ENCODE measurements at regions of chr10 and their contacts with region 1.

Region 1: GRCh38 chr10:103983367-103983911 is 16.5 kb downstream of the SLK start:
- DNase-seq: no peak
- H3K4me3 ChIP-seq: no peak overlapping the region
- H3K27ac ChIP-seq: no peak overlapping the region
- H3K4me1 ChIP-seq: peaks cover 23 to 62% (median 54%) of the 10 kb centered on the region in 4 donors
- H3K27me3 ChIP-seq: no peaks in the 10 kb centered on the region
- CTCF ChIP-seq: no peak
- EP300 ChIP-seq: no peak
- POLR2A ChIP-seq: no peak

Region 2: GRCh38 chr10:103812432-103812831 is 171.0 kb before region 1 on chr10:
- intact Hi-C with region 1: no loop called
- DNase-seq: no peak
- H3K4me3 ChIP-seq: no peak overlapping the region
- H3K27ac ChIP-seq: no peak overlapping the region
- H3K4me1 ChIP-seq: peaks cover 19 to 27% (median 23%) of the 10 kb centered on the region in 4 donors
- H3K27me3 ChIP-seq: no peaks in the 10 kb centered on the region
- CTCF ChIP-seq: no peak
- EP300 ChIP-seq: no peak
- POLR2A ChIP-seq: no peak

Region 3: DNA sequence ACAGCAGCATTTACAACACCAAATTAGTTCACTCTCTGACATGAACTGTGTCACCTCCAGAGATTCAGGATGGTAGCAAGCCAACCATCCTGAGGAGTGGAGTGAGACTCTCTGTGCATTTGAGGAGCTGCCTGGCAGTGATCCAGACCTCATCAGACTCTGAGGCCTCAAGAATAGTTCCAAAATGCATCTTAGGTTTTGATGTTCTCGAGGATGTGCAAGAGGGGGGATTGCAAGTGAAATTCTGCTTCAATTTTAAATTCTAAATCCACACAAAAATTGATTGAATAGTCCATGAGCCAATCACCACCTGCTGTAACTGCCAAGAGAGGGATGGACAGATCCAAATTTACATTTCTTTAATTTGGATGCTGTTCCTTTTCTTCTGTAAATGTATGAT is 33.2 kb after region 1 on chr10:
- intact Hi-C with region 1: loop called (anchors 5 kb)
- DNase-seq: no peak
- H3K4me3 ChIP-seq: no peak overlapping the region
- H3K27ac ChIP-seq: no peak overlapping the region
- H3K4me1 ChIP-seq: no peaks in the 10 kb centered on the region
- H3K27me3 ChIP-seq: no peaks in the 10 kb centered on the region
- CTCF ChIP-seq: no peak
- EP300 ChIP-seq: no peak
- POLR2A ChIP-seq: no peak

Region 4: GRCh38 chr10:104045151-104046089 is 62.0 kb after region 1 on chr10:
- intact Hi-C with region 1: no loop called
- DNase-seq: no peak
- H3K4me3 ChIP-seq: no peak overlapping the region
- H3K27ac ChIP-seq: no peak overlapping the region
- H3K4me1 ChIP-seq: peaks cover 0 to 3% (median 0%) of the 10 kb centered on the region in 4 donors
- H3K27me3 ChIP-seq: no peaks in the 10 kb centered on the region
- CTCF ChIP-seq: peak; percentile 26 to 55 (median 39)
- EP300 ChIP-seq: no peak
- POLR2A ChIP-seq: no peak

Region 5: DNA sequence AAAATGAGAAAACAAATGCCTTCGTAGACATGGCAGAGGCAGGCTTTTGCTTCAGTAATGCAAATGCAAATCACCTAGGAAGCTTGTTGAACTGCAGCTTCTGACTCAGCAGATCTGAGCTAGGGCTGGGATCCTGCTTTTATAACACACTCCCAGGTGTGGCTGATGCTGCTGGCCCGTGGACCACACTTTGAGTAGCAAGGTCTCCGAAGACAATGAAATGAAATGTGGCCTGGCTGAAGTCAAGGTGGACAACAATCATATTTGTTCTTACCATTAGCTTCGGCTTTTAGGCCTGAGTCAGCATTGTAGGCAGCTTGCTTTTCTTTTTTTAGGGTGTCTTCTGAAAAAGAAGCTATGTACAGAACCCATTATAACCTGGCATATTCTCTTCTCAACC is 75.9 kb after region 1 on chr10:
- intact Hi-C with region 1: no loop called
- DNase-seq: no peak
- H3K4me3 ChIP-seq: no peak overlapping the region
- H3K27ac ChIP-seq: no peak overlapping the region
- H3K4me1 ChIP-seq: no peaks in the 10 kb centered on the region
- H3K27me3 ChIP-seq: no peaks in the 10 kb centered on the region
- CTCF ChIP-seq: no peak
- EP300 ChIP-seq: no peak
- POLR2A ChIP-seq: no peak